ENCODE measurements at regions of chr1 and their contacts with region 1.

Region 1: GRCh38 chr1:159798893-159799292 is 3.3 kb upstream of the FCRL6 start:
- DNase-seq: no peak
- H3K4me3 ChIP-seq: no peak overlapping the region
- H3K27ac ChIP-seq: no peak overlapping the region
- H3K4me1 ChIP-seq: no peaks in the 10 kb centered on the region
- H3K27me3 ChIP-seq: peaks cover 0 to 25% (median 0%) of the 10 kb centered on the region in 4 donors
- CTCF ChIP-seq: peak; percentile 36 to 89 (median 80)
- POLR2A ChIP-seq: no peak

Region 2: GRCh38 chr1:159891275-159892157 is 92.6 kb after region 1 on chr1:
- intact Hi-C with region 1: loop called (anchors 2 kb)
- DNase-seq: peak; percentile 25
- H3K4me3 ChIP-seq: no peak overlapping the region
- H3K27ac ChIP-seq: peak overlapping the region in 1 of 4 donors; percentile 9
- H3K4me1 ChIP-seq: peaks cover 10 to 46% (median 21%) of the 10 kb centered on the region in 3 donors
- H3K27me3 ChIP-seq: no peaks in the 10 kb centered on the region
- CTCF ChIP-seq: peak; percentile 95 to 100 (median 98)
- POLR2A ChIP-seq: no peak

Region 3: GRCh38 chr1:160006312-160006940 is 207.5 kb after region 1 on chr1:
- intact Hi-C with region 1: loop called (anchors 10 kb)
- DNase-seq: no peak
- H3K4me3 ChIP-seq: no peak overlapping the region
- H3K27ac ChIP-seq: no peak overlapping the region
- H3K4me1 ChIP-seq: peaks cover 0 to 4% (median 0%) of the 10 kb centered on the region in 3 donors
- H3K27me3 ChIP-seq: no peaks in the 10 kb centered on the region
- CTCF ChIP-seq: peak; percentile 66 to 93 (median 84)
- POLR2A ChIP-seq: no peak